HCT116 (cell line): ENCODE measurements at regions of chr10 and their contacts with region 1.

Region 1: GRCh38 chr10:114470956-114471905 is 66.9 kb upstream of the AFAP1L2 start:
- DNase-seq: peak; percentile 62
- ATAC-seq: peak; percentile 96
- H3K4me3 ChIP-seq: no peak overlapping the region
- H3K27ac ChIP-seq: no peak overlapping the region
- H3K4me1 ChIP-seq: peaks cover 9 to 10% of the 10 kb centered on the region in 2 experiments; a peak in 2 of 4 replicates
- H3K27me3 ChIP-seq: no peaks in the 10 kb centered on the region
- CTCF ChIP-seq: peak; percentile 94 to 97 (median 96)
- POLR2A ChIP-seq: no peak
- RAD21 ChIP-seq: peak; percentile 94

Region 2: DNA sequence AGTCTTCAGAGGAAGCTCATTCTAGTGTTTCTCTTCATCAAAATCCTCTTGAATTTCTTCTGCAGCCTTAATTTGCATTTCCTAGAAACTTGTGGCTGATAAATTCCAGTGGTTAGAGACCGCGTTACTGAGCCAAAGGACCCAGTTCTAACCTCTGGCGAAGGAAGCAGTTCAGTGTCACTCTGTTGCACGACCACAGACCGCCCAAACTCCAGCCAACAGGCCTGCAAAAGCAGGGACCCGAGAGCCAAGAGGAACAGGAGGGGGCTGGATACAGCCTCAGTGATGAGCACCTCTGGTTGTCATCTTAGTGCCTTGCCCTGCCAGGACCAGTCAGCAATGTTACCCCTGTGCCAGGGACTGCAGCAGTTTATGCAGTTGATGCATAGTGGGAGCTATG is 136.9 kb before region 1 on chr10:
- CTCF ChIA-PET with region 1: no interaction called
- POLR2A ChIA-PET with region 1: no interaction called
- RAD21 ChIA-PET with region 1: no interaction called
- intact Hi-C with region 1: no loop called
- DNase-seq: no peak
- ATAC-seq: no peak
- H3K4me3 ChIP-seq: no peak overlapping the region
- H3K27ac ChIP-seq: no peak overlapping the region
- H3K4me1 ChIP-seq: no peaks in the 10 kb centered on the region
- H3K27me3 ChIP-seq: peaks cover 61% of the 10 kb centered on the region
- CTCF ChIP-seq: no peak
- POLR2A ChIP-seq: no peak
- RAD21 ChIP-seq: no peak

Region 3: GRCh38 chr10:114346271-114347031 is 124.8 kb before region 1 on chr10:
- CTCF ChIA-PET with region 1: no interaction called
- POLR2A ChIA-PET with region 1: no interaction called
- RAD21 ChIA-PET with region 1: no interaction called
- intact Hi-C with region 1: no loop called
- DNase-seq: no peak
- ATAC-seq: no peak
- H3K4me3 ChIP-seq: no peak overlapping the region
- H3K27ac ChIP-seq: no peak overlapping the region
- H3K4me1 ChIP-seq: no peaks in the 10 kb centered on the region
- H3K27me3 ChIP-seq: peaks cover 12% of the 10 kb centered on the region; the same call in 1 of the 2 replicates
- CTCF ChIP-seq: no peak
- POLR2A ChIP-seq: no peak
- RAD21 ChIP-seq: no peak

Region 4: DNA sequence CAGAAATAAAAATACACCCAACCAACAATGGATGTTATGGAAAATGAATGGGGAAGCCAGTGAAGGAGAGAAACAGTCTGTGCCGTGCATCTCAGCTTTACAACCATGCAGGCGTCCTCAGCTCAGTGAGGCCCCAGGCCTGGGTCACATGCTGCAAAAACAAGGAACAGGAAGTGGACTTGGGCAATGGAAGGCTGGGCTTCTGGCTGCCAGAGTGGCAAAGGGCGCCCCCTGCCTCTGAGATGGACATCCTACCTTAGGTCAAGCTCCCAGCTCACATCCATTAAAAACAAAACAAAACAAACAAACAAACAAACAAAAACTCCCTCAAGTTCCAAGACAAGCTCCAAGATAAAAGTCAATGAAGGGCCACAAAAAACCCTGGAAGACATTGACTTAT is 12.3 kb before region 1 on chr10:
- CTCF ChIA-PET with region 1: interaction called, 26 read pairs
- POLR2A ChIA-PET with region 1: no interaction called
- RAD21 ChIA-PET with region 1: no interaction called
- intact Hi-C with region 1: no loop called
- DNase-seq: peak; percentile 33
- ATAC-seq: peak; percentile 98
- H3K4me3 ChIP-seq: no peak overlapping the region
- H3K27ac ChIP-seq: no peak overlapping the region
- H3K4me1 ChIP-seq: 0 out of 4 replicates have a peak, but pooled peaks cover 0 to 5% of the 10 kb centered on the region in 2 experiments
- H3K27me3 ChIP-seq: no peaks in the 10 kb centered on the region
- CTCF ChIP-seq: peak; percentile 74 to 89 (median 83)
- POLR2A ChIP-seq: no peak
- RAD21 ChIP-seq: peak; percentile 87

Region 5: DNA sequence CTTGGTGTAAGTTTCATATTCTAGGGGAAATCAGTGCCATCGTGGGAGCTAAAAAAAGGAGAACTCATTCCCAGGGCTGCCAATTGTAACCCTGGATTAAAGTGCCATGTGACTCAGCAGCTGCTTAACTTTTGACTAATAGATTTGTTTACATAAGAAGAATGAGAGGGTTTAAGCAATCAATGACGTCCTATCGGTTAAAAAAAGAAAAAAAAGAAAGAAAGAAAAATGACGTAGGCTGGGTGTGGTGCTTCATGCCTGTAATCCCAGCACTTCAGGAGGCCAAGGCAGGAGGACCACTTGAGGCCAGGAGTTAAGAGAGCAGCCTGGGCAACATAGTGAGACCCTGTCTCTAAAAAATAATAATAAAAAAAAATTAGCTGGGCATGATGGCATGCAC is 49.2 kb after region 1 on chr10:
- CTCF ChIA-PET with region 1: interaction called, 10 read pairs
- POLR2A ChIA-PET with region 1: no interaction called
- RAD21 ChIA-PET with region 1: interaction called in 1 of 2 experiments, 3 read pairs
- intact Hi-C with region 1: loop called (anchors 5 kb)
- DNase-seq: peak; percentile 73
- ATAC-seq: peak; percentile 31
- H3K4me3 ChIP-seq: 0 out of 4 replicates have a peak overlapping the region, but pooled peaks of 1 of the 2 experiments have one; percentile 0
- H3K27ac ChIP-seq: no peak overlapping the region
- H3K4me1 ChIP-seq: peaks cover 50 to 54% of the 10 kb centered on the region in 2 experiments
- H3K27me3 ChIP-seq: no peaks in the 10 kb centered on the region
- CTCF ChIP-seq: no peak
- POLR2A ChIP-seq: no peak
- RAD21 ChIP-seq: no peak

Region 6: GRCh38 chr10:114541081-114541796 is 70.0 kb after region 1 on chr10:
- CTCF ChIA-PET with region 1: interaction called, 96 read pairs
- POLR2A ChIA-PET with region 1: no interaction called
- RAD21 ChIA-PET with region 1: no interaction called
- intact Hi-C with region 1: no loop called
- DNase-seq: no peak
- ATAC-seq: no peak
- H3K4me3 ChIP-seq: no peak overlapping the region
- H3K27ac ChIP-seq: no peak overlapping the region
- H3K4me1 ChIP-seq: peaks cover 10 to 16% of the 10 kb centered on the region in 2 experiments; a peak in 2 of 4 replicates
- H3K27me3 ChIP-seq: no peaks in the 10 kb centered on the region
- CTCF ChIP-seq: no peak
- POLR2A ChIP-seq: no peak
- RAD21 ChIP-seq: no peak

Region 7: DNA sequence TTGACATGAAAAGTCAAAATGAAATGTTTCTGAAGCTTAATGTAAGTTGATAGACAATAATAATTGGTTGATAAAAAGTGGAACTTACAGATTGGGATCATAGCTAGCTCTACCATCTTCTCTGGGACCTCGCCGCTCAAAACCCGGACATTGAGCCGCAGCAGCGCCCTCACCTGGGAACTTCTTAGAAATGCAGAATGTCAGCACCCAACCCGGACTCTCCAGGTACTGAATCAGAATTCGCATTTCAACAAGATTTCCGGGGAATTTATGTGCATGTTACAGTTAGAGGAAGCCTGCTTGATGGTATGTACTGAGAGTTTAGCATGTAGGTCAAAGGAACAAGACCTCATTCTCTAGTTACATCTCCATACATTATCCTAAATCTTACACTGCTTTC is 223.5 kb after region 1 on chr10:
- CTCF ChIA-PET with region 1: interaction called, 17 read pairs
- POLR2A ChIA-PET with region 1: no interaction called
- RAD21 ChIA-PET with region 1: interaction called in 1 of 2 experiments, 3 read pairs
- intact Hi-C with region 1: loop called (anchors 2 kb)
- DNase-seq: peak; percentile 61
- ATAC-seq: peak; percentile 97
- H3K4me3 ChIP-seq: no peak overlapping the region
- H3K27ac ChIP-seq: no peak overlapping the region
- H3K4me1 ChIP-seq: peaks cover 16 to 18% of the 10 kb centered on the region in 2 experiments; a peak in 3 of 4 replicates
- H3K27me3 ChIP-seq: no peaks in the 10 kb centered on the region
- CTCF ChIP-seq: peak; percentile 86 to 97 (median 93)
- POLR2A ChIP-seq: no peak
- RAD21 ChIP-seq: peak; percentile 91

Region 8: DNA sequence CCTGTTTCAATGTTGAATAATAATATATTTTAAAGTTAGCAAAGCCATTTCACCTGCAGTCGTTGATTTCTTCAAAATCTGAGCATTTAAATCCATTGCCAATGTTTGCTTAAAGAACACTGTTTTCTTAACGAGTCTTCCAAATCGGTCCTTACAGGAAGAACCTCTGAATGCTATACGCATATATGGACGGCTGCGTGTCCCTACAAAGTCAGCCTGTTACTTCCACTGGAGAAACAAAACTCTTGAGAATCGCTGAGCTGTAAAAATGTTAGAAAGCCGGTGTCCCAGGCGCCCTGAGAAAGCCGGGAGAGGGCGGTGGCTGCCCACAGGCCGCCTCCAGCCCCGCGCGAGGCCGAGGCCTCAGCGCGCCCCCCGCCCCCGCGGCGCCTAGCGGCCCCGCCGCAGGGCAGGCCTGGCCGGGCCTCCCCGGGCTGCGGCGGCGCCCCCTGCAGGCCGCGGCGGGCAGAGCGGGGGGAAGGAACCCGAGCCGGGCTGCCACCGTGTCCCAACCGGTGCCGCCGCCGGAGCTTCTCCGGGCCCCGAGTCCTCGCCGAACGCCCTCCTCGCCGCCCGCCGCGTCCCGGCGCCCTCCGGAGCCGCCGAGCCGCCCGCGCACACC is 350.2 kb after region 1 on chr10 and contains the start of gene FHIP2A:
- CTCF ChIA-PET with region 1: interaction called, 11 read pairs
- POLR2A ChIA-PET with region 1: no interaction called
- RAD21 ChIA-PET with region 1: no interaction called
- intact Hi-C with region 1: no loop called
- DNase-seq: peak; percentile 54
- ATAC-seq: peak; percentile 92
- H3K4me3 ChIP-seq: peak within 1 kb of the TSS; percentile 69 to 80
- H3K27ac ChIP-seq: peak within 1 kb of the TSS; percentile 86
- H3K4me1 ChIP-seq: peaks cover 7 to 26% of the 10 kb centered on the region in 2 experiments; a peak in 3 of 4 replicates
- H3K27me3 ChIP-seq: no peaks in the 10 kb centered on the region
- CTCF ChIP-seq: peak; percentile 21 to 51 (median 32); a peak in 3 of 6 replicates
- POLR2A ChIP-seq: peak; percentile 30
- RAD21 ChIP-seq: peak; percentile 52
- total RNA-seq, gene FHIP2A: 20.7 TPM

Region 9: DNA sequence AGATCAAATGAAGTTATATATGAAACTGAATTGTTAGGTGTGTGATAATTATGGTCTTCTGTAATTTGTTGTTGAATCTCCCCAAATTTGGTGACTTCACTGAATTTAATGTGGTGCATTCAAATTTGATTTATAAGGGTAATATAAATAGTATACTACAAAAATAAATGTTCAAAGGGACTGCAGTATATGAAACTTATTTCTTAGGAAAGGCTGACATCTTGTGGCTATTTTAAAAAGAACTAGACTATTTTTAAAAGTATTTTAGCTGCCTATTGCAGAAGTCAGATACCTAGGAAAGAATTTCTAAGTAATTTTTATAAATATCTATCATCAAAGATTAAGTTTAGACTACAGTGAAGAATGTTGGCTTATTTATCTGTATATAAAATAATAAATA is 658.5 kb after region 1 on chr10:
- CTCF ChIA-PET with region 1: interaction called, 14 read pairs
- POLR2A ChIA-PET with region 1: no interaction called
- RAD21 ChIA-PET with region 1: interaction called in 1 of 2 experiments, 3 read pairs
- intact Hi-C with region 1: loop called (anchors 5 kb)
- DNase-seq: peak; percentile 43
- ATAC-seq: peak; percentile 58
- H3K4me3 ChIP-seq: no peak overlapping the region
- H3K27ac ChIP-seq: no peak overlapping the region
- H3K4me1 ChIP-seq: no peaks in the 10 kb centered on the region
- H3K27me3 ChIP-seq: no peaks in the 10 kb centered on the region
- CTCF ChIP-seq: peak in 2 of 3 experiments; percentile 52 to 55; a peak in 3 of 6 replicates
- POLR2A ChIP-seq: no peak
- RAD21 ChIP-seq: peak; percentile 79